Psoas muscle (tissue), 8 donors: ENCODE measurements at regions of chrX and their contacts with region 1.

Region 1: GRCh38 chrX:47366028-47366722 is 4.2 kb upstream of the ZNF157 start:
- DNase-seq: peak; percentile 57 to 75
- ATAC-seq: peak; percentile 70 to 90 (median 85)
- H3K4me3 ChIP-seq: peak overlapping the region; percentile 66
- H3K27ac ChIP-seq: no peak overlapping the region
- H3K4me1 ChIP-seq: no peaks in the 10 kb centered on the region
- H3K27me3 ChIP-seq: no peaks in the 10 kb centered on the region
- CTCF ChIP-seq: no peak

Region 2: DNA sequence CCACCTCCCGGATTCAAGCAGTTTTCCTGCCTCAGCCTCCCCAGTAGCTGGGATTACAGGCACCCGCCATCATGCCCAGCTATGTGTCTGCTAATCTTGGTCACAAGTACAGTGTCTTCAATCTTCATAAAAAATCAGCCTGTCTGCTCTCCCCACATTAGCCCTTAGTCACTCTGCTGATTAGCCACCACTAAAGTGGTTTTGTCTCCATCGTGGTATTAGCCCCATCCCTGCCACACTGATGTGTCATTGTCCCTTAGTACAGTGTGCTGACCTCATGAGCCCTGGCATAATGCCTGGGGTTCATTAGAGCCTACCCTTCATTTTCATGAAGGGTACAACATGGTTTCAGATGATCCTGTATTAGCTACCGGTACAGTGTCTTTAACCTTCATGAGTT is 54.1 kb after region 1 on chrX:
- intact Hi-C with region 1: no loop called
- DNase-seq: no peak
- ATAC-seq: no peak
- H3K4me3 ChIP-seq: no peak overlapping the region
- H3K27ac ChIP-seq: no peak overlapping the region
- H3K4me1 ChIP-seq: no peaks in the 10 kb centered on the region
- H3K27me3 ChIP-seq: peaks cover 0 to 4% (median 0%) of the 10 kb centered on the region in 3 donors
- CTCF ChIP-seq: no peak

Region 3: DNA sequence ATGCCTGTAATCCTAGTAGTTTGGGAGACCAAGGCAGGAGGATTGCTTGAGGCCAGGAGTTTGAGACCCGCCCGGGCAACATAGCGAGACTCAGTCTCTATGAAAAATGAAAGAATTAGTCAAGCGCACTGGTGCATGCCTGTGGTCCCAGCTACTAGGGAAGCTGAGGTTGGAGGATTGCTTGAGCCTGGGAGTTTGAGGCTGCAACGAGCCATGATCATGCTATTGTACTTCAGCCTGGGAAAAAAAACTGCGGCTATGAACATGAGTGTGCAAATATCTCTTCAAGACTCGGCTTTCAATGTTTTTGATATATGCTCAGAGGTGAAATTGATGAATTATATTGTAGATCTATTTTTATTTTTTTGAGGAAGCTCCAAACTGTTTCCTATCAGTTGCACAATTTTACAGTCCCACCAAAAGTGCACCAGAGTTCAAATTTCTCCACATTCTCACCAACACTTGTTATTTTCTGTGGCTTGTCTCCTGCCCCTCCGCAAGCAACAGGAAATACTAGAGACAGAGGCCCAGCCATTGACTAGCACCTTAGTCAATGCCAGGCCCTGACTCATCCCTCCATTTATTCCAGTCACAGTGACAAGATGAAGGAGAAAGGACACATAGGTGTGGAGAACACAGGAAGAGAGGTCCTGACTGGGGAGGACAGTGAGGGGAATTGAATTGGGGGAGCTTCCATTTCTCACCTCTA is 149.9 kb after region 1 on chrX:
- intact Hi-C with region 1: loop called in 1 of 2 experiments (anchors 5 kb)
- DNase-seq: no peak
- ATAC-seq: peak; percentile 46 to 71 (median 54)
- H3K4me3 ChIP-seq: no peak overlapping the region
- H3K27ac ChIP-seq: peak overlapping the region; percentile 0
- H3K4me1 ChIP-seq: no peaks in the 10 kb centered on the region
- H3K27me3 ChIP-seq: peaks cover 0 to 3% (median 0%) of the 10 kb centered on the region in 3 donors
- CTCF ChIP-seq: no peak